OCI-LY7 (cell line): ENCODE measurements at regions of chr2 and their contacts with region 1.

Region 1: GRCh38 chr2:12613137-12613835 is 103.5 kb upstream of the TRIB2 start:
- DNase-seq: peak; percentile 59
- H3K4me3 ChIP-seq: peak overlapping the region; percentile 10
- H3K27ac ChIP-seq: peak overlapping the region; percentile 33
- H3K4me1 ChIP-seq: peaks cover 40% of the 10 kb centered on the region
- CTCF ChIP-seq: no peak

Region 2: DNA sequence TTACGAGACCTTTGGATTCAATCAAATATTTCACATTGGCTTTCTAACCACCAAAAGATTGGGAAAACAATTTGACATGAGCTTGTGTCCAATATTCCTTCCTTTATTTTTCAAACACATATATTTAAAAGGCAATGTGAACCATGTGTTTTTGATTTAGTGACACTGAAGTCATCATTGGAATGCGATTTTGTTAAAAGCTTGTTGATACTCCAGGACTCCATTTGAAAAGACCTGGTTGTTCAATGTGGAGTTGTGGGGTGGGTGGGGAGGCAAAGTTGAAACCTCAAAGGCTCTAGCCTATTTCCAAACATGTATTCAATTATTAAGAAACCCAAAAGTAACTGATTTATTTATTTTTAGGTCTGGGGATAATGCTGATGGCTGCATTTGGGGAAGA is 10.6 kb before region 1 on chr2:
- CTCF ChIA-PET with region 1: no interaction called
- POLR2A ChIA-PET with region 1: interaction called, 33 read pairs
- intact Hi-C with region 1: no loop called
- DNase-seq: no peak
- H3K4me3 ChIP-seq: no peak overlapping the region
- H3K27ac ChIP-seq: no peak overlapping the region
- H3K4me1 ChIP-seq: no peaks in the 10 kb centered on the region
- CTCF ChIP-seq: no peak

Region 3: GRCh38 chr2:12624905-12625598 is 11.8 kb after region 1 on chr2:
- CTCF ChIA-PET with region 1: no interaction called
- POLR2A ChIA-PET with region 1: interaction called, 10 read pairs
- intact Hi-C with region 1: no loop called
- DNase-seq: no peak
- H3K4me3 ChIP-seq: no peak overlapping the region
- H3K27ac ChIP-seq: no peak overlapping the region
- H3K4me1 ChIP-seq: no peaks in the 10 kb centered on the region
- CTCF ChIP-seq: no peak

Region 4: DNA sequence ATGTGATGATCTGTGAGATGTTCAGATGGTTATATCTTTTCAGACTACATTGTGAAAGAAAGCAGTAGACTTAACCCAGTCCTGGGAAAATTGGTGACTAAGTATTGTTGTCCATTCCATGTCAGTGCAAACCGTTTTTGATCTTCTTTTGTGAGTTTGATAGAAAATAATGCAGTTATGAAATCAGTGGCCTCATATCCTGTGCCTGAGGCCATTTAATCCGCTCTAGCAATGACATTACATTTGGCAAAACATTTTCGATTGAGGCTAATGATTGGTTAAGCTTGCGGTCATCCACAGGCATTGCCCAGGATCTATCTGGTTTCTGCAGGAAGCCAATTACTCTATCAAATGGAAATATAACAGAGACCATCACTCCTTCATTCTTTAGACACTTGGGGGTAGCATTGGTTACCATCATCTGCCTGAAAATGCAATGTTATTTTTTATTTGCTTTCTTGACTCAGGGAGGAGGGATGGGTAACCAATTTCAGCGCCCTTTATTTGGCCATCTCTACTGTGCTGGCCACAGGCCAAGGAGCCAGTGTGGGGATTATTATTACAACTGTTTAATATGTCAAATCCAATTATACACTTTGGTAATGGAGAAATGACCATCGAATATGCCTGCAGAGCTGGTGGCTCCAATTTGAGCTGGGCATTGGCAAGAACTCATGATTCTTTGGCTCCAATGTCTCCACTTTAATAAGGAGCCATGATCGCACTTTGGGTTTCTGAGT is 137.1 kb after region 1 on chr2:
- CTCF ChIA-PET with region 1: no interaction called
- POLR2A ChIA-PET with region 1: no interaction called
- intact Hi-C with region 1: no loop called
- DNase-seq: no peak
- H3K4me3 ChIP-seq: no peak overlapping the region
- H3K27ac ChIP-seq: no peak overlapping the region
- H3K4me1 ChIP-seq: no peaks in the 10 kb centered on the region
- CTCF ChIP-seq: no peak